ENCODE measurements at regions of chr6 and their contacts with region 1.

Region 1: DNA sequence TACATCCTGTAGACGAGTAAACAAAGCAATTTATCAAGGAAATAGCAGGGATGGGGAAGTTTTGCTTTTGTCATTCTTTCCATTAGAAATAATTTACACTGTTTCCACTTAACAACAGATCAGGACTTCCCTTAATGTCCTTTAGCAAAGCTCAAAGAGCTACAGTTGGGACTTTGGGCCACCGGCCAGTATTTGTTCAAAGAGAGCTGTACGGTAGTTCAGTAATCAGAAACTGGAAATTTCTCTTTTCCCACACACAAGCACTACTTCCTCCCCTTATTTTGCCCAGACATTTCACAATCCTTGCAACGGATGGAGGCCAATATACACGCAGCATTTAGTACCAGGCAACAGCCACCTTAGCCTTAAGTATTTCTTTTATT is 12.1 kb upstream of the HINT3 start:
- DNase-seq: peak; percentile 59
- H3K4me3 Mint-ChIP-seq: no peak overlapping the region
- H3K27ac Mint-ChIP-seq: peak overlapping the region; percentile 95
- H3K4me1 Mint-ChIP-seq: peaks cover 53% of the 10 kb centered on the region
- H3K27me3 Mint-ChIP-seq: no peaks in the 10 kb centered on the region
- CTCF ChIP-seq: no peak

Region 2: DNA sequence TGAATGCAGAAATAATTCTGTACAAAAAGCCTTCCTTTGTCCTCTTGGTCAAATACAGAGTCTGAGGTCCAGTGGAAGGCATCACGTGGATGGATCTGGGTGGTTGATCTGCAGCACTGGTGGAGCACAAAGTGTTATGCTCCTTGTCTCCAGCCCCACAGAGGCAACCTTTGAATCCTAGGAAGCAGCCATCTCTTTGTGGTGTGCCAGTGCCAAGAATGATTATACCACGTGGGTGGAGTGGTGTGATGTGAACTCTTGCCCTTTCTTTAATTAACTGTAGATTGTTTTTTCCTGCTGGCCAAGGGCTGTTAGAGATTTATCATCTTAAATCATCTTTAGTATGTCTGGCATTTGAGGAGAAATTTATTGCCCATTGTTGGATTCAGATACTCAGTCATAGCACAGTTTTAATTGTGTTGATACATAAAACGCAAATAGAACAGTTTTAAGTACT is 122.6 kb before region 1 on chr6:
- CTCF ChIA-PET with region 1: no interaction called
- intact Hi-C with region 1: no loop called
- DNase-seq: no peak
- H3K4me3 Mint-ChIP-seq: no peak overlapping the region
- H3K27ac Mint-ChIP-seq: no peak overlapping the region
- H3K4me1 Mint-ChIP-seq: peaks cover 34% of the 10 kb centered on the region
- H3K27me3 Mint-ChIP-seq: no peaks in the 10 kb centered on the region
- CTCF ChIP-seq: no peak

Region 3: DNA sequence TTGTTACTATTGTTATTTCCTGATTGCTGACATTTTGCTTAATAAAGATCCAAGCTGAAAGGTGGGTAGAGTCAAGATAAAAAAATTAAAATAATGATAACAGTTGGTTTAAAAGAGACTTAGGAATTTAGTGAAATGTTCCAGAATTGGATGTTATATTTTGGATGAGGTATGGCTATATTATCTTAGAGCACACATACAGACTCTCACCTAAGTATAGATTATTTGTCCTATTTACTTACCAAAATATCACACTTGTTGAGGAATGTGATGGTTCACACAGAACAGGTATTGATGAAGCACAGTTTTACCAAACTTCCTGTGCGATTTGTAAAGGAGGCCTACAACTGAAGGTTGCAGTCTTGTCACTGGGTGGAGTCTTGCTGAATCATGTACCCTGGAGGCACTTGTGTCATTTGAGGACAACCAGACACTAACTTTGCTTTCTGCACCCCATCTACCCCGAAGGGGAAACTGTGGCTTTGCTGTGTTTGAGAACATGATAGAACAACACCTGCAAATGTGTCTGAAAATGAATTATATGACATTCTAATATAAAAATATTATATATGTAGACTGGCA is 20.3 kb before region 1 on chr6:
- CTCF ChIA-PET with region 1: no interaction called
- intact Hi-C with region 1: loop called (anchors 1 kb)
- DNase-seq: no peak
- H3K4me3 Mint-ChIP-seq: peak overlapping the region; percentile 86
- H3K27ac Mint-ChIP-seq: peak overlapping the region; percentile 97
- H3K4me1 Mint-ChIP-seq: peaks cover 17% of the 10 kb centered on the region
- H3K27me3 Mint-ChIP-seq: no peaks in the 10 kb centered on the region
- CTCF ChIP-seq: no peak